A673 (cell line): ENCODE measurements at regions of chr3 and their contacts with region 1.

Region 1: DNA sequence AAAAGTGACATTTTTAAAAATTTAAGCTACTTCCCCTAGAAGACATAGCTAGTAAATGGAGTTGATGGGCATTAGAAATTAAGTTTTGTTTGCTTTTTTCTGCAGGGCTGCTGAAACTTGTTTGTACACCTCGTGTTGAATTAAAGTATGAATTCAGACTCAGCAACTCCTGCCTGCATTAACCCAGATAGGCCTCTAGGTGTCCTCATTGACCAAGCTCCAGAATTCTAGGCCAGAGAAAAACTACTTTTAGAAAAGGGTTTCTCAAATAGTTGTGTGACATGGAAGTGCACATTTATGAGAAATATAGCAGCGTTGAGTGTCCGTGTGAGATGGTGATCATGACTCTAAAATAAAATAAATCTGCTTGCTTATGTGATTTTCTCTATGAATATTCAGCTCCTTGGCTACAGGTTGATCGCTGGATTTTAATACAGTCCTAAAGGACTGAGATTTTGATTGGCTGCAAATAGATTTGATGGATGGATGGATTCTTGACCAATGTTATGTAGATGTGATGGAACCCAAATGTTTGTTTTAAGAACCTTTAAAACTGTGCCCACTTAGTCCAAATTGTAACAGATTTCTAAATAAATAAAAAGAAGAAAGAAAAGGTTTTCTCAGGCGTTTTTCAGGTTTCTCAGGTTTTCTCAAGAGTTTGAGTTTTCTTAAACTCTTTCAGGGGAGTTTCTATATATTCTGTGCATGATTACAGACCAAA is 39.4 kb upstream of the LMOD3 start:
- DNase-seq: peak; percentile 32
- H3K4me3 ChIP-seq: no peak overlapping the region
- H3K27ac ChIP-seq: no peak overlapping the region
- H3K4me1 ChIP-seq: no peaks in the 10 kb centered on the region
- H3K27me3 ChIP-seq: no peaks in the 10 kb centered on the region
- CTCF ChIP-seq: peak; percentile 72

Region 2: DNA sequence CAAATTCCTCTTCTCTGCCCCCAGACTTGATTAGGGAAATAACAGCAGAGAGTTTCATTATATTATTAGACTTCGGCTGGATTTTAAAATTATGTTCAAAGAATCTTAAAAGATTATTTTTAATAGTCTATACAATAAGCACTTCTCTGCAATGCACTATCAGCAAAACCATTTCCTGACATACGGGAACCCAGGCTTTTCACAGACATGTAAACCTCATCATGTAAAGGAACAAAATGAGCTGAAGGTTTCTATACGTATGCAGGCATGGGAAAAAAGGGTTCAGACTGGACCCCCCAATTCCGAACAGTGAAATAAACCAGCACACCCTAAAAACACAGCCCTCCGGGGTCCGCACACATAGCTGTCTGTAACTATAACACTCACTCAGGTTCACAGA is 38.2 kb after region 1 on chr3:
- CTCF ChIA-PET with region 1: no interaction called
- POLR2A ChIA-PET with region 1: no interaction called
- intact Hi-C with region 1: loop called (anchors 1 kb)
- DNase-seq: no peak
- H3K4me3 ChIP-seq: no peak overlapping the region
- H3K27ac ChIP-seq: no peak overlapping the region
- H3K4me1 ChIP-seq: no peaks in the 10 kb centered on the region
- H3K27me3 ChIP-seq: no peaks in the 10 kb centered on the region
- CTCF ChIP-seq: no peak

Region 3: DNA sequence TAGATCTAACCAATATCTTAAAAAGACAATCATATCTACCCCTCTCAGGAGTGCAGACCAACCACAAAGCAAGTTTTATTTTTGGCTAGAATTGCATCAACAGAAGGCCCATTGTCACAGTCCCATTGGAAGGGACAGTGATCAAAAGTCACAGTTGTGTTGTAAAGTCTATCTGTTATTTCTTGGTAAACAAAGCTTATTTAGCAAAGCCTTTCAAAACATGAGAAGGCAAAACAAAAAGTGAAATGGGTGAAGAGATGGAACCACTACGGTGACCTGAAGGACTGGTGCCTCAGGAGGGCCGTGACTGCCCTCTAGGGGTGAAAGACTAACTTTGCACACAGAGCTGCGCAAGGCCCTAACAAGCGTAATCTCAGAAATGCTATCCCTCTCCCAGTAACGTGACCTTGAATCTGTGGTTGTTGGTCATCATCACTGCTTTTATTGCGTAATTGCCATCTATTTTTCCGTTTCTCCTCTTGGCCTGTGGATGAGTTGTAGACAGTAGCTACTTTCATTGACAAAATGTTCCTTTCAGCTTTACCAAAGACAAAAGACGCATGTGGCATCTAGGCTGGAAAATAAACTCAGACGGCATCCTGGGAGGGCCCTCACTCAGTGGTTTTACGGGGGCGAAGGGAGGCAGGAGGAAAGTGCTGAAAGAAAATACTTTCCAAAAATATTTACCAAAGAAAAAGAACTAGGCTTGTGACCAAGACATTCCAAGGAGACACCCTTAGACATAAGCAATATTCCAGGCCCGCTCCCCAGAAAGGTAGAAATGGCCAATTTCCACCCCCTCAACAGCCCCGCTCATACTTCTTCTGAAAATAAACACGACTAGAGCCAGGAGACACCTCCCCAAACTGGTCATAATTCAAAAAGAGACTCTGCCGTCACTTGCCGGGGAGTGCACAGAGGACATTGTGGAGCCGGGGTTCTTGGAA is 144.8 kb after region 1 on chr3:
- CTCF ChIA-PET with region 1: interaction called, 7 read pairs
- POLR2A ChIA-PET with region 1: no interaction called
- intact Hi-C with region 1: loop called (anchors 2 kb)
- DNase-seq: peak; percentile 66
- H3K4me3 ChIP-seq: no peak overlapping the region
- H3K27ac ChIP-seq: no peak overlapping the region
- H3K4me1 ChIP-seq: no peaks in the 10 kb centered on the region
- H3K27me3 ChIP-seq: no peaks in the 10 kb centered on the region
- CTCF ChIP-seq: peak; percentile 69

Region 4: DNA sequence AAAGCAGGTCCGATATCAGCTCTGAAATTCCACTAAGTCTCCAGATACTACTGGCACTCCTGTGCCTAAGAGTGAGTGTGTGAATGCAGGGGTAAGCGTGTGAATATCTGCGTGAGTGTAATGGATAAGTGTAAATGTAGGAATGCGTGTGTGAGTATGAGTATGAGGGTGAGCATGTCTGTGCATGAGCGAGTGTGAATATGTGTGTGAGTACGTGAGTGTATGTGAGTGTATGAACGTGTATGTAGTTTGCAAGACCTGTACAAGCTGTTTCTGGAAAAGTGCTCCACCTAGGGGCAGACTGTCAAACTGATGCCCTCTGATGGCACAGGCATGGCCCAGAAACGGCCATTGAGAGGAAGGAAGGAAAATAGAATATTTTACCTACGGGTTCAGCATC is 248.5 kb after region 1 on chr3:
- CTCF ChIA-PET with region 1: no interaction called
- POLR2A ChIA-PET with region 1: no interaction called
- intact Hi-C with region 1: loop called (anchors 5 kb)
- DNase-seq: peak; percentile 35
- H3K4me3 ChIP-seq: no peak overlapping the region
- H3K27ac ChIP-seq: no peak overlapping the region
- H3K4me1 ChIP-seq: no peaks in the 10 kb centered on the region
- H3K27me3 ChIP-seq: no peaks in the 10 kb centered on the region
- CTCF ChIP-seq: peak; percentile 67

Region 5: DNA sequence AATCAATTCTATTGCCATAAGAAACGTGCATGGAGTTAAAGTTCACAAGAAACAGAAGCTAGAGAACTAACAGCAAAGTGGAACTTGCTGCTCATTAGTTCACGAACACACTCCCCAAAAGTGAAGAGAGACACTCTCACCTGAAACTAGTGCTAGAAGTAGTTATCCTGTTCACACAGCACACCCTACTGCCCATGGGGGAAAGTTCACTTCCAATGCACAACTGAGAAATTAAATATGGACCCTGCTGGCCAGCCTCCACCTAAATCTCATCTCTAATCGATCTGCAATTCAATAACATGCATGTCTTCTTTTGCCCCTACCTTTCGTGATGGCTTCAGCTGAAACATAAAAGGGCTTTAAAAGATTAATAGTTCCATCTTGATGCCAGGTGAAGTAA is 263.5 kb after region 1 on chr3:
- CTCF ChIA-PET with region 1: no interaction called
- POLR2A ChIA-PET with region 1: no interaction called
- intact Hi-C with region 1: loop called (anchors 5 kb)
- DNase-seq: peak; percentile 2
- H3K4me3 ChIP-seq: no peak overlapping the region
- H3K27ac ChIP-seq: no peak overlapping the region
- H3K4me1 ChIP-seq: no peaks in the 10 kb centered on the region
- H3K27me3 ChIP-seq: no peaks in the 10 kb centered on the region
- CTCF ChIP-seq: 0 out of 2 replicates have a peak, but pooled peaks have one; percentile 20

Region 6: DNA sequence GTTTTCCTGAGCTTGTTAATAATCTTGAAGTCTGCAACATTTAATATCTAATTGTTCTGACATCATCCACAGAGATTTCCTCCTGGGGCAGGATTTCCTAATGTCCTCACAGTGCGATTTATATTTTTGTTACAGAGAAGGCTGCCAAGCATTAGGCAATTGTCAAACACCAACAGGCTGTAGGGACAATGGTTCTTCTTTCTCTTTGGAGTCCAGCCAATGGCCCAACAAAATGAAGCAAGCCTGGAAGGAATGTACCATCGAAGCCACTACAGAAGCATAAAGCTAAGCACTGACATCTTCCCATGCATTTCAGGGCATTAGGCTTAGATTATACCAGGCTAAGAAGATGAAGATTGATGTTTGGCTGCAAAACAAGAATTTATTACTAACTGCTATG is 397.2 kb after region 1 on chr3:
- CTCF ChIA-PET with region 1: no interaction called
- POLR2A ChIA-PET with region 1: no interaction called
- intact Hi-C with region 1: no loop called
- DNase-seq: no peak
- H3K4me3 ChIP-seq: no peak overlapping the region
- H3K27ac ChIP-seq: no peak overlapping the region
- H3K4me1 ChIP-seq: no peaks in the 10 kb centered on the region
- H3K27me3 ChIP-seq: no peaks in the 10 kb centered on the region
- CTCF ChIP-seq: no peak

Region 7: GRCh38 chr3:69671082-69671952 is 509.6 kb after region 1 on chr3:
- CTCF ChIA-PET with region 1: no interaction called
- POLR2A ChIA-PET with region 1: no interaction called
- intact Hi-C with region 1: loop called (anchors 5 kb)
- DNase-seq: peak; percentile 15
- H3K4me3 ChIP-seq: no peak overlapping the region
- H3K27ac ChIP-seq: no peak overlapping the region
- H3K4me1 ChIP-seq: no peaks in the 10 kb centered on the region
- H3K27me3 ChIP-seq: no peaks in the 10 kb centered on the region
- CTCF ChIP-seq: peak; percentile 52